ENCODE measurements at regions of chr5 and their contacts with region 1.

Region 1: GRCh38 chr5:124748687-124749594 is 2.5 kb upstream of the ZNF608 start:
- DNase-seq: peak; percentile 69
- ATAC-seq: peak; percentile 81 to 89

Region 2: DNA sequence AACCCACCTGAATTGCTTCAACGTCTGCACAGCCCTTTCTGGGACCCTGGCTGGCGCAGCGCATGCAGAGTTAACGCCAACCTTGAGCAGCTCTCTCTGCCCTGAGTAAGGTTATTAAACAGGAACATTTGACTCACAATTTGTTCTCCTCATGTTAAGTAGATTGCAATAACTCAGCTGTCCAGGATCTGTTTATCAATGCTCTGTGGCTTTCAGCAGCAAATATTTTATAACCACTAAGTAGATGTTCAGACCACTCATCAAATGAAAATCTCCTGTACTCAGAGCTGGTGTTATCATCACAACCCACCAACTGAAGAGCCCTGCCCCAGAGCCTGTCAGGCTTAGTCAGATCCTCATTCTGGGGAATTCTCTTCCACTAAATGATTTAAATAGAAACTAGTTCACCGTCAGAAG is 405.5 kb before region 1 on chr5:
- intact Hi-C with region 1: loop called in 1 of 2 experiments (anchors 5 kb)
- DNase-seq: no peak
- ATAC-seq: peak; percentile 38 to 90

Region 3: GRCh38 chr5:124444147-124444775 is 304.7 kb before region 1 on chr5:
- intact Hi-C with region 1: no loop called
- DNase-seq: no peak
- ATAC-seq: peak; percentile 95 to 97

Region 4: GRCh38 chr5:124649491-124650146 is 99.3 kb before region 1 on chr5:
- intact Hi-C with region 1: loop called in 1 of 2 experiments (anchors 2 kb)
- DNase-seq: peak; percentile 75
- ATAC-seq: peak; percentile 39 to 45

Region 5: GRCh38 chr5:124902097-124902821 is 153.3 kb after region 1 on chr5:
- intact Hi-C with region 1: loop called in 1 of 2 experiments (anchors 2 kb)
- DNase-seq: no peak
- ATAC-seq: peak in 1 of 2 donors; percentile 50

Region 6: DNA sequence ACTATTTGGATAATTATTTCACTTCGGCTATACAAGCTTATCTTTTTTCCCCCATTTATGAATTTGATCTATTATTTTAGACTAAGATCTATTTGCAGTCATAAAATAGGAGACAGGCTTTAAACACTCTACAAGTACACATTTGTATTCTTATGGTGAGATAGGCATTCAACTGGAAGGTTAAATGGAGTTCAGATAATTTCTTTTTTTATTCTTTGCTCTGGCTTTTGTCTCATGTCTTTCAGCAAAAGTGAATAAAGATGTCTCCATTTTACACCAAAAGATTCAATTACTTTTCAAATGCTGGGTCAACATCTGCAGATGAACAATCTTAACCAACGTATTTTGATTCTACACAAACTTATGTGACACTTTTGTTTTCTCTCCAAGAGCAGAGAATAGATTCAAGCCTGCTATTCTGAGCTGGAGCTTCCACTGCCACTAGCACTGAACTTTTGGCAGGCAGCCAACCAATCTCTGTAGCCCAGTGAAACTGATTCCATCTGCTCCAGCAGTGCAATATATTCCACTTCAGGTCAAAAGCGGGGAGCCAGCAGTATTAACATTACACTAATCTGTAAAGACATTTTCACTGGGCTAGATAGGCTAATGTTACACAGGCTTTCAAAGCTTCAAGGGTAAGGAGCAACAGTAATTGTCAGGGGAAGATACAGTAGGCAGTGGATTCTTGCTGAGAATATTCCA is 449.5 kb after region 1 on chr5:
- intact Hi-C with region 1: loop called in 1 of 2 experiments (anchors 5 kb)
- DNase-seq: peak; percentile 87
- ATAC-seq: peak; percentile 67 to 70

Measured in left cardiac atrium (tissue), 4 donors.